Tibial artery (tissue), 4 donors: ENCODE measurements at regions of chr10 and their contacts with region 1.

Region 1: DNA sequence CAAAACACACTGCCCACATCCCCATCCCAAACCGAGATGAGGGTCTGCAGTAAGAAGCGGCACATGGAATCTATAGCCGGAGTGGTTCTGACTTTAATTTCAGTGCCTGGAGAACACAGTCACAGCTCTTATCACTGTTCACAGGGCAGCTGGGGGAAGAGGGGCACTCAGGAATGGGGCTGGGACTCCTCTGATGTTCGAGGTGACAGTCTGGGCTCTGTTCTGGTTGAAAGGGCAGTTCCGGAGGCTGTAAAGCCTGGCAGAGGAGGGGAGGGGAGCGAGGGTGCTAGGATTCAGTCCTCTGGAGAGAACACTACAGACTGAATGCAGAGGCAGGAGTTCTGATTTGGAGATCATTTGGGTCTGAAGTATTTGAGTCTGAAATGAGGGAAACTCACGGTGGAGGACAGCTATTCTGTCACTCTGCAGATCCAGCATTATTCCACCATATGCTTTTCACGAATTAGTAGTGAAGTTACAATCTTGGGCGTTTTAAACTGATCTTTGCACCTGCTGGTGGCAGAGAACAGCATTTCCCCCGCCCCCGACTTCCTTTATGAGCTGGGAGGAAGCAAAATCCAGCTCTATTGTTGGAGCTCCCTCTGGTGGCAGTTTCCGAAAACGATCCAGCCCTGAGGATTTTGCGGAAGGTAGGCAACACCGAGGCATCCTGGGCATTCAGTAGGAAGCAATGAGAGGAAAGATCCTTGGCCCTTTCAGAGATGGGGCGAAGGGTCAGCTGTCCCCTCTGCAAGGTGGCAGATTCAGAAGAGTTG is 22.7 kb upstream of the KCNK18 start:
- DNase-seq: peak; percentile 74 to 76
- H3K4me3 ChIP-seq: peak overlapping the region; percentile 38 to 53
- H3K27ac ChIP-seq: no peak overlapping the region
- H3K4me1 ChIP-seq: peaks cover 0 to 16% (median 13%) of the 10 kb centered on the region in 4 donors
- H3K27me3 ChIP-seq: peaks cover 0 to 64% of the 10 kb centered on the region in 2 donors
- CTCF ChIP-seq: peak; percentile 70 to 71

Region 2: DNA sequence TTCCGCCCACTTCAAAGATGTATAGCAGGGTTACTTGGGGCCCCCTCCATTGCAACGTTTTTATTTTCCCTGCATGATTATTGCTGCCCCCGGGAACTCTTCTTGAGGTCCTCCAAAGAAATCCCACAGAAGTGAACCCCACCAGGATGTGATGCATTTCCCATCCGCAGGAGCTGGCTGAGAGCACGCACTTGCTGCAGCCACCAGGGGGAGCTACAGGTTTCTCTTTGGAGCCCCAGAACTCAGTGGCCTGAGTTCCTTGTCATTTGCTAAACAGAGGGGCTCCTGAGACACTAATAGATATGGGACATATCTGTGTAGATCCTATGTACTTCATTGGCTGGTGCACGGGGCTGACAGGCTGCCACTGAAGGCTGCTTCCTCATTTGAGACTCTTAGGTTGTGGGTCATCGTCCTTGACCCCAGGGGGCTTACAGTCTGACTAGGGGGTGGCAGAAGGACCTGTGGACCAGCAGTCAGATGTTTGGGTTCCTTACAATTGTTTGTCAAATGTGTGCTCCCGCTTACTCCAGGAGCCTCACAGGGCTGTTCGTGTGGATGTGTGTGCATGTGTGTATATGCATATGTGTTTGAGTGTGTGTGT is 377.6 kb before region 1 on chr10:
- intact Hi-C with region 1: loop called (anchors 5 kb)
- DNase-seq: peak; percentile 51 to 75
- H3K4me3 ChIP-seq: no peak overlapping the region
- H3K27ac ChIP-seq: no peak overlapping the region
- H3K4me1 ChIP-seq: no peaks in the 10 kb centered on the region
- H3K27me3 ChIP-seq: peaks cover 0 to 39% of the 10 kb centered on the region in 2 donors
- CTCF ChIP-seq: peak; percentile 87 to 91

Region 3: GRCh38 chr10:117198088-117198487 is 23.5 kb after region 1 on chr10:
- intact Hi-C with region 1: no loop called
- DNase-seq: no peak
- H3K4me3 ChIP-seq: no peak overlapping the region
- H3K27ac ChIP-seq: no peak overlapping the region
- H3K4me1 ChIP-seq: no peaks in the 10 kb centered on the region
- H3K27me3 ChIP-seq: peaks cover 0 to 27% of the 10 kb centered on the region in 2 donors
- CTCF ChIP-seq: no peak